GM12878 (cell line): ENCODE measurements at regions of chr2 and their contacts with region 1.

Region 1: GRCh38 chr2:58571181-58571852 is 330.2 kb upstream of the FANCL start:
- DNase-seq: peak; percentile 7
- ATAC-seq: peak; percentile 95
- H3K4me3 ChIP-seq: no peak overlapping the region
- H3K27ac ChIP-seq: no peak overlapping the region
- H3K4me1 ChIP-seq: no peaks in the 10 kb centered on the region
- H3K27me3 ChIP-seq: no peaks in the 10 kb centered on the region
- CTCF ChIP-seq: peak; percentile 57 to 69 (median 64)
- EP300 ChIP-seq: no peak
- POLR2A ChIP-seq: no peak
- RAD21 ChIP-seq: peak; percentile 61

Region 2: DNA sequence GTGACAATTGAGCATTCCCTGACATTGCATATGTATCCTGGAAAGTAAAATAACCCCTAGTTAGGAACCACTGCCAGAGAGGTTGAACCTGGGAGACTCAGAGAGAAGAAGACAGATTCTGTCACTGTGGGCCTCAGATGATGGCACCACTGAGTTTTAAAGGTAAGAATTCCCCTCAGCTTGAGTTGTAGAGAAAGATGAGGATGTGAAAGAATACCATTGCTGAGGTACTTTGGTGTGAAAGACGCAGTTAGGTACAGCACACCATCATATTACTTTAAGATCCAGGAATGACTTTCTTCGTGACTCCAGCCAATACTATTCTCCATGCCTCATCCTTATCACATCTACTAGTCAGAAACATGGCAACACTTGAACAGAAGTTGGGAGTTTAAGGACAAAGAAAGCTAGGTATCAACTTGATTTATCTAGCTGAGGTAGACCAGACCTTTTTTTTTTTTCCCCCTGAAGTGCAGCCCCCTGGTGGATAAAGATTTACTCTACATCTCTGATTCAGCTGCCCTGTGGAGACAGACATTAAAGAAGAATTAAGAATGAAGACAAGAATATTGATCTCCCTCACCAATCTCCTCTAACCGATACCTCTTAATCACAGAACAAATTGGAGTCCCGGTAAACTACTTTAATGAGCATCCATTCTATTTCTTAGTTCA is 300.3 kb after region 1 on chr2:
- CTCF ChIA-PET with region 1: interaction called, 3 read pairs
- POLR2A ChIA-PET with region 1: no interaction called
- RAD21 ChIA-PET with region 1: interaction called, 6 read pairs
- SMC1A ChIA-PET with region 1: no interaction called
- in situ Hi-C with region 1: no loop called
- intact Hi-C with region 1: loop called (anchors 5 kb)
- DNase-seq: no peak
- ATAC-seq: peak; percentile 73
- H3K4me3 ChIP-seq: no peak overlapping the region
- H3K27ac ChIP-seq: no peak overlapping the region
- H3K4me1 ChIP-seq: no peaks in the 10 kb centered on the region
- H3K27me3 ChIP-seq: no peaks in the 10 kb centered on the region
- CTCF ChIP-seq: peak; percentile 10 to 29 (median 21); a peak in 3 of 6 replicates
- EP300 ChIP-seq: no peak
- POLR2A ChIP-seq: no peak
- RAD21 ChIP-seq: peak; percentile 48